ENCODE measurements at regions of chr6 and their contacts with region 1.

Region 1: DNA sequence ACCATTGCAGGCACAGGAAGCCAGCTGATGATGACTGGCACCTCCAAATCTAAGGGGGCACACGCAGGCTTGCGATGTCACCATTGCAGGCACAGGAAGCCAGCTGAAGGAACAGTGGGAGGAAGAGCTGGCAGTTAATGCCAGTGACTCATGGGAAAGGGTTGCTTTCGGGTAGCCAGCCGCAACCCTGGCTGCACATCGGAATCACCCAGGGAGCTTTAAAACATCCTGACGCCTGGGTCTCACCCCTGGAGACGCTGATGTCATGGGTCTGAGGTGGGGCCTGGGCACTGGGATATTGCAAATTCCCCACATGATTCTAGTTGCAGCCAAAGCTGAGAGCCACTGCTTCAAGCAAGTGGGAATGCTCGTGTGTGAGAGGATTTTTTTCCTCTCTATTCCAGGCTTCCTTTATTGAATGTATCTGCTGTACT is 16.1 kb upstream of the CCN6 start:
- DNase-seq: peak; percentile 49
- ATAC-seq: peak; percentile 6
- H3K4me3 Mint-ChIP-seq: no peak overlapping the region
- H3K27ac Mint-ChIP-seq: no peak overlapping the region
- H3K4me1 Mint-ChIP-seq: peaks cover 83% of the 10 kb centered on the region
- H3K27me3 Mint-ChIP-seq: no peaks in the 10 kb centered on the region

Region 2: GRCh38 chr6:111154981-111155380 is 882.8 kb before region 1 on chr6:
- CTCF ChIA-PET with region 1: no interaction called
- POLR2A ChIA-PET with region 1: no interaction called
- intact Hi-C with region 1: loop called in 1 of 2 experiments (anchors 10 kb)
- DNase-seq: peak; percentile 56
- ATAC-seq: peak; percentile 97
- H3K4me3 Mint-ChIP-seq: no peak overlapping the region
- H3K27ac Mint-ChIP-seq: no peak overlapping the region
- H3K4me1 Mint-ChIP-seq: peaks cover 43% of the 10 kb centered on the region
- H3K27me3 Mint-ChIP-seq: no peaks in the 10 kb centered on the region

Region 3: DNA sequence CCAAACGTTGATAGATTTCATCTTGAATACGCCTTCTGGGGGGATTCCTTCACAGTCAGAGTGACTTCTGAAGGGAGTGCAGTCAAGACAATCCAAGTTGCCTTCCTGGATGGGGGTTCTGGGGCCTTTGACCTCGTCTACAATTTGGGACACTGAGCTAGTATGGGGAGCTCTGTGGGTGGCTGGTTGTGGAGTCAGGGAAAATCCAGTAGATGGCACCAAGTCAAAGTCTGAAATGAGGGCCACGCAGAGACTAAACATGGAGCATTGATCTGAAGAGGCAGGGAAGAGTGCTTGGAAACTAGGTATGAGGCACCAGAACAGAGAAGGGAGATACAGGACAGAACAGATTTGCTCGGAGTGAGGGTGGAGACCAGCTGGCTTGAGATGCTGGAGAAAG is 27.5 kb before region 1 on chr6:
- CTCF ChIA-PET with region 1: interaction called, 54 read pairs
- POLR2A ChIA-PET with region 1: no interaction called
- intact Hi-C with region 1: no loop called
- DNase-seq: peak; percentile 42
- ATAC-seq: peak; percentile 82
- H3K4me3 Mint-ChIP-seq: no peak overlapping the region
- H3K27ac Mint-ChIP-seq: no peak overlapping the region
- H3K4me1 Mint-ChIP-seq: peaks cover 42% of the 10 kb centered on the region
- H3K27me3 Mint-ChIP-seq: no peaks in the 10 kb centered on the region

Region 4: DNA sequence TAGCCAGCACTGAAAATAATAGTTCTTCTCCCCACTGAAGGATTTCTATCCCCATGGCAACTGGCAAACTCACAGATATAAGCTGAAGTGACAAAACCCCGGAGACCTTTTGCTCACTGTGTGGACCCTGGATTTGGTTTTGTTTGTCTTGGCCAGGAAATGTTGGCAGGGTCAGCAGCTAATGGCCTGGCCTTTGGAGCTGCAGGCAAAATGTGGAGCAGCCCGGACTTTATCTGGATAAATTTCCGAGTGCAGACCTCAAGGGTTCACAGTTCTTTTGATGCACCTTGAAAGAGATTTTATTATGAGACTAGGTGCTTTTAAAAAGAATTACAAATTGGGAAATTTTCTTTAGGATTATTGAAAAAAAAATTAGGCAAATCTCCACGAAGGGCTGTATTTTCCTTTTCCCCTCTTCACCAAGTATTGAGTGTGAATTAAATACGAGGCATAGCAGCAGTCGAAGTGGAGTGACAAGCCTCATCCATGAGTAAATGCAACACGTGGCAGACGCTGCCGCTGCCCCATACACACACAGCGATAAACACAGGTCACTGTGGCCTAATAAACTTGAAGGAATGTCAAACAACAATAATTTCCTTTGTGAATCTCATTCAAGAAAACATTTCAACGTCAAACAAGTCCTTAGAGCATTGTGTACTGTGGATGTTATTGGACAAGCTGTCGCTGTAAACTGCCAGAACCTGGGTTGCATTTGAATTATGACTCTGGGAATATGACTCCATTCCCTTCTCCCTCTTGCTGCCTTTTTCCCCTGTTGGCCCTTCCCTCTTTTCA is 19.0 kb before region 1 on chr6:
- CTCF ChIA-PET with region 1: interaction called, 54 read pairs
- POLR2A ChIA-PET with region 1: interaction called, 4 read pairs
- intact Hi-C with region 1: loop called in 1 of 2 experiments (anchors 1 kb)
- DNase-seq: no peak
- ATAC-seq: no peak
- H3K4me3 Mint-ChIP-seq: no peak overlapping the region
- H3K27ac Mint-ChIP-seq: peak overlapping the region; percentile 43
- H3K4me1 Mint-ChIP-seq: peaks cover 78% of the 10 kb centered on the region
- H3K27me3 Mint-ChIP-seq: no peaks in the 10 kb centered on the region

Measured in activated CD4-positive, alpha-beta T cell treated with anti-CD3 and anti-CD28 coated beads for 36 hours (primary cell).